ENCODE measurements at regions of chr16 and their contacts with region 1.

Region 1: DNA sequence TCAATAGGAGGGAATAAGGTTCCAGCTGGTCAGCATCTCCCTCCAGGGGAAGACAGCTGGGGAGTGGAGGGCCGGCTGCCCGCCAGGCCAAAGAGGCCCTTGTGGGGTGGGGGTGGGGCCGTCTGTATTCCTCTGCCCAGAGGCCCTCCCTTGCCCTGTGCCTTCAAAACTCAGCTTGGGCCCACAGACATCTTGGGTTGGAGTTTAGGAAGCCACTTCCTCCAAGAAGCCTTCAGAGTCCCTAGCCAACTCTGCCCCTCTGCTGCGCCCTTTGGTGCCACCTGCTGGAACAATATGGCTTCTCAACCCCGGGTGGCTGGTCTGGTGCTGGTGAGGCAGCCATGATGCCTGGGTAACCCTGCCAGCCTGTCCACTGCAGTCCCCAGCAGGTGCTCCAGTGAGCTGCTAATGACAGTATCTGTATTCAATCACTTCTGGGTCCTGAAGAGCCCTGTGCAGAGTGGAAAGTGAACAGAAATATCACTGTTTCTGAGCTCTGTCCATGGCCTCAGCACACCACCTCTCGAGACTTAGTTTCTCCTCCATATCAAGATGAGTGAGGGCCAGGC is 16.7 kb downstream of the HSD11B2 start:
- DNase-seq: peak; percentile 46
- ATAC-seq: peak; percentile 82
- H3K4me3 Mint-ChIP-seq: no peak overlapping the region
- H3K27ac Mint-ChIP-seq: no peak overlapping the region
- H3K4me1 Mint-ChIP-seq: no peaks in the 10 kb centered on the region
- H3K27me3 Mint-ChIP-seq: no peaks in the 10 kb centered on the region
- CTCF ChIP-seq: no peak

Region 2: GRCh38 chr16:67246934-67247697 is 200.5 kb before region 1 on chr16 and contains the start of gene FHOD1:
- CTCF ChIA-PET with region 1: no interaction called
- POLR2A ChIA-PET with region 1: no interaction called
- intact Hi-C with region 1: no loop called
- DNase-seq: peak; percentile 100
- ATAC-seq: peak; percentile 70
- H3K4me3 Mint-ChIP-seq: peak within 1 kb of the TSS; percentile 85
- H3K27ac Mint-ChIP-seq: peak within 1 kb of the TSS; percentile 80
- H3K4me1 Mint-ChIP-seq: peaks cover 50% of the 10 kb centered on the region
- H3K27me3 Mint-ChIP-seq: peaks cover 2% of the 10 kb centered on the region
- CTCF ChIP-seq: no peak
- total RNA-seq, gene FHOD1: 45.5 and 50.4 TPM in 2 replicates

Region 3: GRCh38 chr16:67372664-67373063 is 74.9 kb before region 1 on chr16:
- CTCF ChIA-PET with region 1: no interaction called
- POLR2A ChIA-PET with region 1: no interaction called
- intact Hi-C with region 1: loop called (anchors 5 kb)
- DNase-seq: no peak
- ATAC-seq: no peak
- H3K4me3 Mint-ChIP-seq: no peak overlapping the region
- H3K27ac Mint-ChIP-seq: no peak overlapping the region
- H3K4me1 Mint-ChIP-seq: no peaks in the 10 kb centered on the region
- H3K27me3 Mint-ChIP-seq: peaks cover 5% of the 10 kb centered on the region
- CTCF ChIP-seq: no peak

Region 4: DNA sequence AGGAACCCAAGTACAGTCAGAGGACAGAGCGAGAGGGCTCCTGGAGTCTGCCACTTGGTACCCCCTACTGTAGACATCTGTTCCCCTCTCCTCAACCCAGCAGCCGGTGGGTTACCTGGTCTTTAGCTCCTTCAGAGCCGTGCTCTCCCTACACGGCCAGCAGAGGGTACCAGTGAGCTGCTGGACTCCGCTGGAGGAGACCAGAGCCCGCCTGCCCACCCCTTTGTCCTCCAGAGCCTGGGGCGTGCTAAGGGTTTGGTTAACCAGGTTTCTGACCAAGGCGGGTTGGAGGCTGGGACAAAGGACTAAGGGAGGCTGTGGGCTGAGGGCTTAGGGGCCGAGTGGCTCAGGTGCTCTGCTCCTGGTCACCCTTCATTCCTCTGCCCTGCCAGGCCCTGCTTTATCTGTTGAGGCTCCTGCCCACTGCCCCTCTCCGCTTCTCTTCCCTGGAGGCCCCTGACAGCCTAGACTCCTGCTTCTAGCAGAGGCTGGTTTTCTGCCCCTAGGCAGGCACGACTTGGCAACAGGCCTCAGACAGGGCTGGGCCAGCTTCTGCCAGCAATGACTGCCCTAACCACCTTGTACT is 19.4 kb before region 1 on chr16:
- CTCF ChIA-PET with region 1: interaction called, 28 read pairs
- POLR2A ChIA-PET with region 1: no interaction called
- intact Hi-C with region 1: loop called (anchors 1 kb)
- DNase-seq: peak; percentile 51
- ATAC-seq: peak; percentile 76
- H3K4me3 Mint-ChIP-seq: no peak overlapping the region
- H3K27ac Mint-ChIP-seq: no peak overlapping the region
- H3K4me1 Mint-ChIP-seq: peaks cover 19% of the 10 kb centered on the region
- H3K27me3 Mint-ChIP-seq: peaks cover 37% of the 10 kb centered on the region
- CTCF ChIP-seq: peak; percentile 65

Measured in activated B cell treated with CpG ODN at 0.5 μM for 24 hours (primary cell).